Panc1 (cell line): ENCODE measurements at regions of chr4 and their contacts with region 1.

Region 1: DNA sequence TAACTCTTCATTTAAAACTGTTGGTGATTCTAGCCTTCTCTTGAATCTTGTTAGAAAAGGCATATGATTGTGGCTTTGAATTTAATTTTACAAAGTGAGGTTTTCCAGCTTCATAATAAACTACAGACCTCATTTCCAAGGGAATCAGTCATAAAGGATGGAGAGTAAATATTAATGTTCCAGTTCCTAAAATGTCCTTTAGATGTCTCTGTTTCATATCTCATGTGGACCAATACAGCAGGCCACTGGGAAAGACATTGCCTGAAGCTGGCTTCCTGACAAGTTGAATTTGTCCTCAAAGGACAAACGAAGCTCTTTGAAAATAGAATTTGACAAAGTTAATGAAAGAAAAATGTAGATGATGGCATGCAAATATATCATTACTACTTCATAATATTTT is 125.4 kb downstream of the ZNF330 start:
- DNase-seq: no peak
- ATAC-seq: peak; percentile 81; the same call in 1 of the 2 replicates
- H3K4me3 ChIP-seq: no peak overlapping the region
- H3K27ac ChIP-seq: no peak overlapping the region
- H3K4me1 ChIP-seq: no peaks in the 10 kb centered on the region
- H3K27me3 ChIP-seq: no peaks in the 10 kb centered on the region
- CTCF ChIP-seq: peak; percentile 53; the same call in 1 of the 2 replicates

Region 2: DNA sequence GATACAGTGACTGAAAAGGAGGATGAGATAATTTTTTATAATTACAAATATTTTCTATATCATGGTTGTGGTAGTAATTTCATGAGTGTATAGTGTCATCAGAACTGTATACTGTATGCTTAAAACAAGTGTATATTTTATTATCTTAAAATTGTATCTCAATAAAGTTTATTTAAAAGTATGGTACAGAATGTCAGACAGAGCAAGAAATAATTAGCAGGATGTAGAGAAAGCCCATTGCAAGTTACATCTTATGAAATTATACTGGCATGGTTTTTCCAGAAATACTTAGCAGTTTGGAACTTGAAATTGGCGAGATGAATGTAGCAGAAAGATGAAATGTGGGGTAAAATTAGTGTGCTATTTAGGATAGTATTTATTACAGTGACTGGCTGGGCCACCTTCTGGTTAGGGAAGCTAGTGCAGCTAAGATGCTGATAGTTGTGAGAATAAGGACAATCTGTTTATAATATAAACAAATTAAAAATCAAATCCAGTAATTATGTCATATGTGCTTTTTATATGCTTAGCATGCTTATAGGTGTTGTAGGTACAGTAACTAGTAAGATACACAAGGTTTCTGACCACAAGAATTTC is 365.0 kb after region 1 on chr4:
- CTCF ChIA-PET with region 1: interaction called, 3 read pairs
- POLR2A ChIA-PET with region 1: no interaction called
- in situ Hi-C with region 1: no loop called
- intact Hi-C with region 1: loop called (anchors 10 kb)
- DNase-seq: no peak
- ATAC-seq: no peak
- H3K4me3 ChIP-seq: no peak overlapping the region
- H3K27ac ChIP-seq: no peak overlapping the region
- H3K4me1 ChIP-seq: no peaks in the 10 kb centered on the region
- H3K27me3 ChIP-seq: no peaks in the 10 kb centered on the region
- CTCF ChIP-seq: peak; percentile 43; the same call in 1 of the 2 replicates

Region 3: DNA sequence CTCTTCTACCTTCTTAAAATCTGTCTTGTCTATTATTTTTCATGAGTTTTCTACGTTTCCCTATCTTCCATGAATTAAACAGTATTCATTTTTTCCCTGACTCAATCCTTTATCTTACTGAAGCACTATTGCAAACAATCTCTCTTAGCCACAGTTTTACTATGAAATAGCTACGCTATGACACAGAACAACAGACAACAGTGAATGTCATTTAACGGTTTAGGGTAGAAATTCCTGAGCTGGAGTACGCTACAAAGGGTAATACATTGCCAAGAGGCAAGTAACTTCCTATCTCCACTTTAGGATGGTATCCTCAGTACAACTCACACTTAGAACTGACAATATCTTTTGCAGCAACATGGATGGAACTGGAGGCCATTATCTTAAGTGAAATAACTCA is 947.4 kb after region 1 on chr4:
- CTCF ChIA-PET with region 1: interaction called, 10 read pairs
- POLR2A ChIA-PET with region 1: no interaction called
- in situ Hi-C with region 1: no loop called
- intact Hi-C with region 1: no loop called
- DNase-seq: no peak
- ATAC-seq: peak; percentile 70
- H3K4me3 ChIP-seq: no peak overlapping the region
- H3K27ac ChIP-seq: no peak overlapping the region
- H3K4me1 ChIP-seq: no peaks in the 10 kb centered on the region
- H3K27me3 ChIP-seq: no peaks in the 10 kb centered on the region
- CTCF ChIP-seq: no peak